H1 (cell line): ENCODE measurements at regions of chr15 and their contacts with region 1.

Region 1: GRCh38 chr15:46280762-46281542 is 646.1 kb downstream of the SQOR start:
- DNase-seq: no peak
- H3K4me3 ChIP-seq: no peak overlapping the region
- H3K27ac ChIP-seq: no peak overlapping the region
- H3K4me1 ChIP-seq: 0 out of 7 replicates have a peak, but pooled peaks cover 0 to 2% (median 0%) of the 10 kb centered on the region in 4 experiments
- H3K27me3 ChIP-seq: no peaks in the 10 kb centered on the region
- CTCF ChIP-seq: peak in 2 of 3 experiments; percentile 70 to 87; a peak in 3 of 4 replicates
- EP300 ChIP-seq: no peak
- POLR2A ChIP-seq: no peak
- RAD21 ChIP-seq: peak; percentile 83

Region 2: DNA sequence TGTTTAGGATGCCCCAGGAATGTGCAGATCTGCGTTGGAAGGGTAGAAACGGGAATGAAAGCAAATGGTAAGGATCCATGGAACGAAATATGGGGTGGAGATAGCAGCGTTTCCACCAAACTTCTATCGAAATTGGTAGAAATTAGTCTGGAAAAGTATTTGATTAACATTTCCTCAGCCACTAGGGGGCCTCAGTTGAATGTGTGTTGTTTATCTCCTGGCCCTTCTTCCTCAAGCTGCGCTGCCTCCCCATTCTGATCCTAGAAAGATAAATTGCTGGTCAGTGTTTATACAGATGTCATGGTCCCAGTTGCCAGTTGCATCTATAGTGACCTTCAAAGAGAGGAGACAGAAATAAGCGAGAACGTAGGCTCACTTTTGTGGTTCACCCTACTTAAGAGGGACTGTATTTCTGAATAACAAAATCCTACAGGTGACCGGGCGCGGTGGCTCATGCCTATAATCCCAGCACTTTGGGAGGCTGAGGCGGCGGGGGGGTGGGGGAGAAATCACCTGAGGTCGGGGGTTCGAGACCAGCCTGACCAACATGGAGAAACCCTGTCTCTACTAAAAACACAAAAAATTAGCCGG is 189.0 kb before region 1 on chr15:
- CTCF ChIA-PET with region 1: interaction called, 14 read pairs
- POLR2A ChIA-PET with region 1: no interaction called
- DNase-seq: peak; percentile 15 to 59
- H3K4me3 ChIP-seq: no peak overlapping the region
- H3K27ac ChIP-seq: no peak overlapping the region
- H3K4me1 ChIP-seq: no peaks in the 10 kb centered on the region
- H3K27me3 ChIP-seq: no peaks in the 10 kb centered on the region
- CTCF ChIP-seq: peak in 2 of 3 experiments; percentile 67 to 72; a peak in 3 of 4 replicates
- EP300 ChIP-seq: no peak
- POLR2A ChIP-seq: no peak
- RAD21 ChIP-seq: peak; percentile 87 to 89

Region 3: DNA sequence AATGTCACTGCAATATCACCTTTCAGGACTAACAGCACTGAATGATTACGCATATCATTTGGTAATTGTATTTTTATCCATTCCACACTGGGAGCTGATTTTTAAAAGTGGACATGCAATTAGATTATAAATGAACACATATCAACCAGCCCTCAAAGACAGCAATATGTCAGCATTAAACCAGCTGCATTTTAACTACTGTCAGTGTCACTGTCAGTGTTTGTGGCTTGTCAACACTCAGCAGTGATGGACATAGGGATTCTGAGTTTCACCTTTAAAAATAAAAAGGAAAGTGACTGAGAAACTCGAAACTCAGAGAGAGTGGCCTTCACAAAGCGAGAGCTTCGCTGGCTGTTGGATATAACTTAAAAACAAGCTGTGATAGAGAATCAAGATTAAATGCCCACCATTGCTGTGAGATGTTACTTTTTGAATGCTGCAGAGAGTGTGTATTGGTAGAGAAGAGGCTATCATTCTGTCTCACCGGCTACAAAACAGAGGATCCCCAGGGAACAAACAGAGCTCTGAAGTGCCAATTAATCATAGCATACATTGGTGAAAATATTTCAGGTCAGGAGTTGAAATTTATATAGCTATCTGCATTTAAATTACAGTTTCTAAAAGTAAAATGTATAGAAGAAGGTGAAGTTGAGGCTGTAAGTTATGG is 10.3 kb before region 1 on chr15:
- CTCF ChIA-PET with region 1: interaction called, 10 read pairs
- POLR2A ChIA-PET with region 1: no interaction called
- DNase-seq: no peak
- H3K4me3 ChIP-seq: no peak overlapping the region
- H3K27ac ChIP-seq: no peak overlapping the region
- H3K4me1 ChIP-seq: no peaks in the 10 kb centered on the region
- H3K27me3 ChIP-seq: no peaks in the 10 kb centered on the region
- CTCF ChIP-seq: no peak
- EP300 ChIP-seq: no peak
- POLR2A ChIP-seq: no peak
- RAD21 ChIP-seq: no peak